ENCODE measurements at regions of chr19 and their contacts with region 1.

Region 1: DNA sequence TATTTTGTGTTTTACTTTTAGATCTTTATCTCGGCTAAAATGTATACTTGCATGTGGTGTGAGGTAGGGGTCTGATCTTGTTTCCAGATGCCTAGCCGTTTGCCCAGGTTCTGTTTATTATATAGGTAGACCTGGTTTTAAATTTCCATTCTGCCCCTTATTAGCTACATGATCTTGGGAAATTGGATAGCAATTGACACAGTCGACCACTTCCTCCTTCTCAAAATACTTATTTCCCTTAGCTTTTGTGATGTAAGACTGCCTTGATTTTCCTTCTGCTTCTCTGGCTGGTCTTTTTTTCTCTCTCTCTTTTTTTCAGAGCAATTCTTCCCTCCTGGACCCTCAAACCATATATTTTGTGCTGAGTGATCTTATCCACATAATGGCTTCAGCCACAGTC is 3.0 kb upstream of the PGLYRP1 start:
- DNase-seq: no peak
- H3K4me3 Mint-ChIP-seq: no peak overlapping the region
- H3K27ac Mint-ChIP-seq: no peak overlapping the region
- H3K4me1 Mint-ChIP-seq: peaks cover 18% of the 10 kb centered on the region
- H3K27me3 Mint-ChIP-seq: peaks cover 47% of the 10 kb centered on the region

Region 2: GRCh38 chr19:45952686-45953505 is 72.9 kb before region 1 on chr19:
- CTCF ChIA-PET with region 1: no interaction called
- DNase-seq: peak; percentile 74
- H3K4me3 Mint-ChIP-seq: peak overlapping the region; percentile 63
- H3K27ac Mint-ChIP-seq: peak overlapping the region; percentile 70
- H3K4me1 Mint-ChIP-seq: peaks cover 29% of the 10 kb centered on the region
- H3K27me3 Mint-ChIP-seq: peaks cover 33% of the 10 kb centered on the region

Region 3: GRCh38 chr19:46265217-46265828 is 239.5 kb after region 1 on chr19:
- CTCF ChIA-PET with region 1: interaction called, 35 read pairs
- DNase-seq: peak; percentile 79
- H3K4me3 Mint-ChIP-seq: no peak overlapping the region
- H3K27ac Mint-ChIP-seq: no peak overlapping the region
- H3K4me1 Mint-ChIP-seq: peaks cover 18% of the 10 kb centered on the region
- H3K27me3 Mint-ChIP-seq: peaks cover 64% of the 10 kb centered on the region